ENCODE measurements at regions of chr13 and their contacts with region 1.

Region 1: GRCh38 chr13:20924758-20925394 is 22.3 kb upstream of the XPO4 start:
- DNase-seq: peak; percentile 45
- H3K4me3 ChIP-seq: no peak overlapping the region
- H3K27ac ChIP-seq: no peak overlapping the region
- H3K4me1 ChIP-seq: no peaks in the 10 kb centered on the region
- H3K27me3 ChIP-seq: no peaks in the 10 kb centered on the region
- CTCF ChIP-seq: peak; percentile 80 to 84

Region 2: DNA sequence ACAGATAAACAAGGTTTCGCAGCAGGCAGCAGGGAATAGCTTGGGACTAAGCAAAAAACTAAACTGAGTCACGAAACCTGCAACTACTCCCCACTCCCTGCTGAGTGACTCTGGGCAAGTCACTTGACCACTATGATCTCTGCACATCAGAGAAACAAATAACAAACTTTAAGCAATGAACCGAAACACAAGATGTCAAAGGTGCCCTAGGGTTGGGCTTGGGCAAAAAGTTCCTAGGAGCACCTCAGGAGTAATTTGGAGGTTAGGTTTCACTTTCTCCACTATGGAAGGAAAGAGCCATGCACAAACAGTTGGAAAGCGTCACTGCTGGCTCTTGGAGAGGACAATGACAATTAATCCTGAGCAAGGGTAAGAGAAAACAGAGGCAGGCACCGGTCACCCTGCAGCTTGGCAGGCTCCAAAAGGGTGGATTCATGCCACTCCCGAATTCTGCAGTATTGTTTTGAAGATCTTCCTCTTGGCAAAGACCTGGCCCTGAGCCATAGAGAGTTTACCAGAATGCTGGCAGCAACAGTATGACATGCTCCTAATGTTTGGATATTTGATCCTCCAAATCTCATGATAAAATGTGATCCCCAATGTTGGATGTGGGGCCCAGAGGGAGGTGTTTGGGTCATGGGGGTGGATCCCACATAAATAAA is 459.5 kb before region 1 on chr13:
- CTCF ChIA-PET with region 1: interaction called, 10 read pairs
- dilution Hi-C with region 1: no loop called
- in situ Hi-C with region 1: no loop called
- intact Hi-C with region 1: no loop called
- DNase-seq: peak; percentile 28
- H3K4me3 ChIP-seq: no peak overlapping the region
- H3K27ac ChIP-seq: no peak overlapping the region
- H3K4me1 ChIP-seq: peaks cover 3% of the 10 kb centered on the region
- H3K27me3 ChIP-seq: no peaks in the 10 kb centered on the region
- CTCF ChIP-seq: no peak

Region 3: DNA sequence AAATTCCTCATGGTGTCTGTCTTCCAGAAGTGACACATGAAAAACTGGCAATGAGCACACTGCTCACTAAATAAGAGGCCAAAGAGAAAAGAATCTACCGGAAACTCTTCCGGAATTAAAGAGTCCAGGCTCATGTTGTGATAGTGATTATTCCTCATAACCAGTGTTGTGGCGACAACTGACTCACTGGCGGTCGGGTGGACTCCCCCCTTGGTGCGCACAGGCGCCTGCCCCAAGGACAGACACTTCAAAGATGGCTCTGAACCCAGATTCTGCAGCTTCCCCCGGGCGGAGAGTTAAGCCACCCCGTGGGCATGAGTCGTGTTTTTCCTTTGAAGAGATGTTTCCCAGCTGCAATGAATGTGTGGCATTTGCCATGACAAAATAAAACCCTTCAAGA is 211.1 kb before region 1 on chr13:
- CTCF ChIA-PET with region 1: no interaction called
- dilution Hi-C with region 1: no loop called
- in situ Hi-C with region 1: no loop called
- intact Hi-C with region 1: loop called (anchors 1 kb)
- DNase-seq: no peak
- H3K4me3 ChIP-seq: no peak overlapping the region
- H3K27ac ChIP-seq: no peak overlapping the region
- H3K4me1 ChIP-seq: no peaks in the 10 kb centered on the region
- H3K27me3 ChIP-seq: no peaks in the 10 kb centered on the region
- CTCF ChIP-seq: no peak

Region 4: GRCh38 chr13:21043898-21044297 is 119.0 kb after region 1 on chr13:
- CTCF ChIA-PET with region 1: no interaction called
- dilution Hi-C with region 1: no loop called
- in situ Hi-C with region 1: no loop called
- intact Hi-C with region 1: no loop called
- DNase-seq: no peak
- H3K4me3 ChIP-seq: no peak overlapping the region
- H3K27ac ChIP-seq: no peak overlapping the region
- H3K4me1 ChIP-seq: no peaks in the 10 kb centered on the region
- H3K27me3 ChIP-seq: no peaks in the 10 kb centered on the region
- CTCF ChIP-seq: no peak

Region 5: GRCh38 chr13:21124852-21125251 is 200.0 kb after region 1 on chr13:
- CTCF ChIA-PET with region 1: interaction called, 14 read pairs
- dilution Hi-C with region 1: no loop called
- in situ Hi-C with region 1: no loop called
- intact Hi-C with region 1: no loop called
- DNase-seq: no peak
- H3K4me3 ChIP-seq: no peak overlapping the region
- H3K27ac ChIP-seq: no peak overlapping the region
- H3K4me1 ChIP-seq: no peaks in the 10 kb centered on the region
- H3K27me3 ChIP-seq: no peaks in the 10 kb centered on the region
- CTCF ChIP-seq: no peak

Region 6: GRCh38 chr13:21476893-21477472 is 552.1 kb after region 1 on chr13:
- CTCF ChIA-PET with region 1: no interaction called
- dilution Hi-C with region 1: no loop called
- in situ Hi-C with region 1: loop called in 1 of 2 experiments (anchors 25 kb)
- intact Hi-C with region 1: no loop called
- DNase-seq: peak; percentile 73
- H3K4me3 ChIP-seq: peak overlapping the region in 2 of 3 experiments; percentile 0 to 2
- H3K27ac ChIP-seq: no peak overlapping the region
- H3K4me1 ChIP-seq: no peaks in the 10 kb centered on the region
- H3K27me3 ChIP-seq: no peaks in the 10 kb centered on the region
- CTCF ChIP-seq: peak; percentile 85 to 99

Measured in mammary epithelial cell (primary cell).